CD4-positive, alpha-beta memory T cell (primary cell): ENCODE measurements at regions of chr6 and their contacts with region 1.

Region 1: GRCh38 chr6:136249811-136250685 is at the start of gene MTFR2:
- DNase-seq: peak; percentile 94 to 98 (median 96)
- H3K4me3 ChIP-seq: peak within 1 kb of the TSS; percentile 82 to 83
- H3K4me3 Mint-ChIP-seq: peak within 1 kb of the TSS; percentile 91 to 99 (median 96)
- H3K27ac ChIP-seq: peak within 1 kb of the TSS; percentile 57
- H3K27ac Mint-ChIP-seq: peak within 1 kb of the TSS; percentile 74 to 96 (median 88)
- H3K4me1 ChIP-seq: peaks cover 21% of the 10 kb centered on the region
- H3K4me1 Mint-ChIP-seq: peaks cover 24 to 43% (median 34%) of the 10 kb centered on the region in 4 donors
- H3K27me3 ChIP-seq: no peaks in the 10 kb centered on the region
- H3K27me3 Mint-ChIP-seq: no peaks in the 10 kb centered on the region
- total RNA-seq, gene MTFR2: 1.2 TPM

Region 2: GRCh38 chr6:135497412-135498269 is 752.4 kb before region 1 on chr6 and contains the start of gene AHI1:
- CTCF ChIA-PET with region 1: no interaction called
- POLR2A ChIA-PET with region 1: interaction called, 11 read pairs
- intact Hi-C with region 1: loop called (anchors 1 kb)
- DNase-seq: peak; percentile 86 to 92 (median 89)
- H3K4me3 ChIP-seq: peak within 1 kb of the TSS; percentile 32 to 97
- H3K4me3 Mint-ChIP-seq: peak within 1 kb of the TSS in 3 of 8 donors; percentile 29 to 95 (median 59)
- H3K27ac ChIP-seq: peak within 1 kb of the TSS; percentile 87
- H3K27ac Mint-ChIP-seq: peak within 1 kb of the TSS in 3 of 7 donors; percentile 21 to 69 (median 28)
- H3K4me1 ChIP-seq: peaks cover 15% of the 10 kb centered on the region
- H3K4me1 Mint-ChIP-seq: peaks cover 5 to 9% (median 6%) of the 10 kb centered on the region in 4 donors
- H3K27me3 ChIP-seq: no peaks in the 10 kb centered on the region
- H3K27me3 Mint-ChIP-seq: no peaks in the 10 kb centered on the region
- total RNA-seq, gene AHI1: 12.2 to 12.8 TPM

Region 3: GRCh38 chr6:135506270-135506997 is 743.6 kb before region 1 on chr6:
- CTCF ChIA-PET with region 1: no interaction called
- POLR2A ChIA-PET with region 1: no interaction called
- intact Hi-C with region 1: loop called (anchors 1 kb)
- DNase-seq: peak; percentile 39 to 46 (median 40)
- H3K4me3 ChIP-seq: no peak overlapping the region
- H3K4me3 Mint-ChIP-seq: peak overlapping the region in 3 of 8 donors; percentile 13 to 39 (median 20)
- H3K27ac ChIP-seq: no peak overlapping the region
- H3K27ac Mint-ChIP-seq: no peak overlapping the region
- H3K4me1 ChIP-seq: no peaks in the 10 kb centered on the region
- H3K4me1 Mint-ChIP-seq: peaks cover 0 to 5% (median under 1%) of the 10 kb centered on the region in 4 donors
- H3K27me3 ChIP-seq: no peaks in the 10 kb centered on the region
- H3K27me3 Mint-ChIP-seq: no peaks in the 10 kb centered on the region

Region 4: GRCh38 chr6:135901774-135902524 is 348.1 kb before region 1 on chr6:
- CTCF ChIA-PET with region 1: no interaction called
- POLR2A ChIA-PET with region 1: no interaction called
- intact Hi-C with region 1: no loop called
- DNase-seq: peak in 1 of 5 donors; percentile 15
- H3K4me3 ChIP-seq: no peak overlapping the region
- H3K4me3 Mint-ChIP-seq: no peak overlapping the region
- H3K27ac ChIP-seq: no peak overlapping the region
- H3K27ac Mint-ChIP-seq: no peak overlapping the region
- H3K4me1 ChIP-seq: no peaks in the 10 kb centered on the region
- H3K4me1 Mint-ChIP-seq: peaks cover 0 to 3% (median 2%) of the 10 kb centered on the region in 4 donors
- H3K27me3 ChIP-seq: no peaks in the 10 kb centered on the region
- H3K27me3 Mint-ChIP-seq: no peaks in the 10 kb centered on the region

Region 5: DNA sequence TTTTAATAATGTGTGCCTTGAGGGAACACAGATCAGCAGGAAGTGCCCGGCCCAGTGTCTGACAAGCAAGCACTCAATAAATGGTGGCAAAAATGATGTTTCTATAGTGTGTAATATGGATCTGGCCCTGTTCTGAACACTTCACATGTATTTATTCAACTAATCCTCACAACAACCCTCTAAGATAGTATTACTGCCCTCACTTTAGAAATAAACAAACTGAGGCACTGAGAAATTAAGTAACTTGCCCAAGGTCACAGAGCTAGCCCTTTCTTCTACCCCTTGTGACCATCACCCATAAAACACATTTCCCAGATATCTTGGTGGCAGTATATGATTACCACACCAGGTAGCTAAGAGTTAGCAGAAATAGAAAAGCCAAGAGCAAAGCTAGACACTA is 12.9 kb after region 1 on chr6:
- CTCF ChIA-PET with region 1: interaction called, 6 read pairs
- POLR2A ChIA-PET with region 1: interaction called, 11 read pairs
- intact Hi-C with region 1: loop called (anchors 1 kb)
- DNase-seq: no peak
- H3K4me3 ChIP-seq: no peak overlapping the region
- H3K4me3 Mint-ChIP-seq: no peak overlapping the region
- H3K27ac ChIP-seq: no peak overlapping the region
- H3K27ac Mint-ChIP-seq: peak overlapping the region in 2 of 7 donors; percentile 14 to 62
- H3K4me1 ChIP-seq: peaks cover 8% of the 10 kb centered on the region
- H3K4me1 Mint-ChIP-seq: peaks cover 19 to 37% (median 28%) of the 10 kb centered on the region in 4 donors
- H3K27me3 ChIP-seq: no peaks in the 10 kb centered on the region
- H3K27me3 Mint-ChIP-seq: no peaks in the 10 kb centered on the region

Region 6: DNA sequence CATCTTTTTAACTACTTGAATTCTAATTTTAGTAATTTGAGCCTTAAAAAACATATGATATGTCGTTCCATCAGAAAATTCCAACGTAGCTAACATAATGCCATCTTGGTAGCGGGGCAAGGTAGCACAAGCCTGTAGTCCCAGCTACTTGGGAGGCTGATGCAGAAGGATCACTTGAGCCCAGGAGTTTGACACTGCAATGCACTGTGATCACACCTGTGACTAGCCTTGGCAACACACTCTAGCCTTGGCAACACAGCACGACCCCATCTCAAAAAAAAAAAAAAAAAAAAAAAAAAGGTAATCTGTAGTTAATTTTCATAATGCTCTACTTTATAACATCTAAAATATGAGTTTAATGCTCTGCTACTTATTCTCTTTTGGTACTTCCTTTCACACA is 32.9 kb after region 1 on chr6:
- CTCF ChIA-PET with region 1: interaction called, 17 read pairs
- POLR2A ChIA-PET with region 1: interaction called, 198 read pairs
- intact Hi-C with region 1: no loop called
- DNase-seq: peak in 1 of 5 donors; percentile 33
- H3K4me3 ChIP-seq: peak overlapping the region in 1 of 2 donors; percentile 14
- H3K4me3 Mint-ChIP-seq: peak overlapping the region; percentile 57 to 88 (median 80)
- H3K27ac ChIP-seq: peak overlapping the region; percentile 20
- H3K27ac Mint-ChIP-seq: peak overlapping the region; percentile 21 to 80 (median 69)
- H3K4me1 ChIP-seq: peaks cover 84% of the 10 kb centered on the region
- H3K4me1 Mint-ChIP-seq: peaks cover 57 to 92% (median 79%) of the 10 kb centered on the region in 4 donors
- H3K27me3 ChIP-seq: no peaks in the 10 kb centered on the region
- H3K27me3 Mint-ChIP-seq: no peaks in the 10 kb centered on the region